ENCODE measurements at regions of chr13 and their contacts with region 1.

Region 1: GRCh38 chr13:97018029-97018831 is 24.0 kb upstream of the OXGR1 start:
- H3K4me3 ChIP-seq: no peak overlapping the region
- H3K27ac ChIP-seq: no peak overlapping the region
- H3K4me1 ChIP-seq: no peaks in the 10 kb centered on the region
- CTCF ChIP-seq: no peak

Region 2: GRCh38 chr13:96617528-96617927 is 400.7 kb before region 1 on chr13:
- CTCF ChIA-PET with region 1: no interaction called
- POLR2A ChIA-PET with region 1: no interaction called
- H3K4me3 ChIP-seq: no peak overlapping the region
- H3K27ac ChIP-seq: no peak overlapping the region
- H3K4me1 ChIP-seq: no peaks in the 10 kb centered on the region
- CTCF ChIP-seq: no peak

Region 3: GRCh38 chr13:97004096-97004876 is 13.9 kb before region 1 on chr13:
- CTCF ChIA-PET with region 1: interaction called, 14 read pairs
- POLR2A ChIA-PET with region 1: no interaction called
- H3K4me3 ChIP-seq: no peak overlapping the region
- H3K27ac ChIP-seq: no peak overlapping the region
- H3K4me1 ChIP-seq: no peaks in the 10 kb centered on the region
- CTCF ChIP-seq: no peak